ENCODE measurements at regions of chr20 and their contacts with region 1.

Region 1: DNA sequence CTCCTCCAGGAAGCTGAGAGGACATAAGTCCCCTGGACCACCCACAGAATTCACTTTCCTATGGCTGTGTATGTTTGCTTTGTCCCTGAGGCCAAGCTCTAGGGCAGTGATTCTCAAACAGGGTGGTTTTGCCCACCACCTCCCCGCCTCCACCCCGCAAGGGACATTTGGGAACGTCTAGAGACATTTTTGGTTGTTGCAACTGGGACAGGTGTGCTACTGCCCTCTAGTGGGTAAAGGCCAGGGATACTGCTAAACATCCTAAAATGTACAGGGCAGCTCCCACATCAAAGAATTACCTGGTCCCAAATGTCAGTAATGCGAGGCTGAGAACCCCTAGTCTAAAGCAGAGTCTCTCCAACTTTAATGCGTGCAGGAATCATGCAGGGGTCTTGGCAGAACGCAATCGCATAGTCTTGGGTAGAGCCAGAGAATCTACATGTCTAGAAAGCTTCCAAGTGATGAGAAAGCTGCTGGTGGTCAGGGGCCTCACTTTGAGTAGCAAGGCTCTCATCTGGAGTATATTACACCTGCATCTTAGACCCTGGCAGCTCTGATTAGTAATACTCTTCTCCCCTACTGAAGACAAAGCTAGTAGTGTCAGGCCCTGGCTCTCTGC is 5.1 kb downstream of the KCNS1 start:
- DNase-seq: peak; percentile 29 to 68 (median 49)
- H3K4me3 ChIP-seq: no peak overlapping the region
- H3K4me3 Mint-ChIP-seq: no peak overlapping the region
- H3K27ac ChIP-seq: no peak overlapping the region
- H3K27ac Mint-ChIP-seq: peak overlapping the region in 1 of 8 donors; percentile 63
- H3K4me1 ChIP-seq: peaks cover 3% of the 10 kb centered on the region
- H3K4me1 Mint-ChIP-seq: peaks cover 8 to 27% (median 12%) of the 10 kb centered on the region in 3 donors
- H3K27me3 ChIP-seq: peaks cover 35% of the 10 kb centered on the region
- H3K27me3 Mint-ChIP-seq: peaks cover 29 to 33% of the 10 kb centered on the region in 2 donors

Region 2: DNA sequence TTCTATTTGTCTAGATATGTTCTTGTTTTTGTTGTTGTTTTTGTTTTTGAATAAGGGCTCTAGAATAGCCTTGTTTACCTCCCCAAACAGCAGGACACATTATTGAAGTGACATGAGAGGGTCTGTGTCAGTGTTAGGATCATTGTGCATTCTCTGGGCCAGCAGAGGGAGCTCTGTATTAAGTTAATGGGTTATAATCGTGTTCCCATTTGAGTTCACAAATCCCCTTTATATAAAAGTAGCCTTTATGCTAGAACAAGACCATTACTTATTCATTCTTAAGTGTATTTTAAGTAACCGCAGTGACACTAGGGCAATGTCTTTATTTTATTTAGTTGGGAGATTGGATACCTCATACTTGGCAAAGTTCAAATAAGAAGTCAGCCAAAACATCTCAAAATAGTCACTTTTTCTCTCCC is 84.7 kb before region 1 on chr20:
- CTCF ChIA-PET with region 1: interaction called, 28 read pairs
- POLR2A ChIA-PET with region 1: no interaction called
- DNase-seq: peak; percentile 13 to 55 (median 19)
- H3K4me3 ChIP-seq: no peak overlapping the region
- H3K4me3 Mint-ChIP-seq: no peak overlapping the region
- H3K27ac ChIP-seq: no peak overlapping the region
- H3K27ac Mint-ChIP-seq: peak overlapping the region in 7 of 8 donors; percentile 4 to 80 (median 52)
- H3K4me1 ChIP-seq: peaks cover 32% of the 10 kb centered on the region
- H3K4me1 Mint-ChIP-seq: peaks cover 64 to 83% (median 83%) of the 10 kb centered on the region in 3 donors
- H3K27me3 ChIP-seq: no peaks in the 10 kb centered on the region
- H3K27me3 Mint-ChIP-seq: no peaks in the 10 kb centered on the region

Region 3: GRCh38 chr20:45036044-45036755 is 59.7 kb before region 1 on chr20:
- CTCF ChIA-PET with region 1: interaction called, 65 read pairs
- POLR2A ChIA-PET with region 1: no interaction called
- DNase-seq: no peak
- H3K4me3 ChIP-seq: no peak overlapping the region
- H3K4me3 Mint-ChIP-seq: peak overlapping the region in 2 of 7 donors; percentile 10 to 37
- H3K27ac ChIP-seq: no peak overlapping the region
- H3K27ac Mint-ChIP-seq: peak overlapping the region in 7 of 8 donors; percentile 4 to 83 (median 55)
- H3K4me1 ChIP-seq: peaks cover 55% of the 10 kb centered on the region
- H3K4me1 Mint-ChIP-seq: peaks cover 71 to 95% (median 93%) of the 10 kb centered on the region in 3 donors
- H3K27me3 ChIP-seq: no peaks in the 10 kb centered on the region
- H3K27me3 Mint-ChIP-seq: no peaks in the 10 kb centered on the region

Region 4: DNA sequence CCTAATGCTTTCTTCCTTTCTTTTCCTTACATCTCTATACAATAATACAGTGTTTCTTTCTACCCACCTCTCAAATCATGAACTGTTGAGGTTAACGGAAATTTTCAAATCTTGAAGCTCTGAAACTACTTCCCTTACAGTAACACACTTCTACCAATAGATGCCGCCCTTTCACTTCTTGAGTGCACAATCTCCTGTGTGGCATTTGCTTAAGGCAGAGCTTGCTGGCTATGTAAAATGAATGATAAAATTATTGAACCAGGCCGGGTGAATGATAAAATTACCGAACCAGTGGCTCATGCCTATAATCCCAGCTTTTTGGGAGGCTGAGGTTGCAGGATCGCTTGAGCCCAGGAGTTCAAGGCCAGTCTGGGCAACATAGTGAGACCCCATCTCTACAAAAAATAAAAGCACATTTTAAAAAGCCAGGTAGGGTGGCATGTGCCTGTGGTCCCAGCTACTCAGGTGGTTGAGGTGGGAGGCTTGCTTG is 51.7 kb before region 1 on chr20:
- CTCF ChIA-PET with region 1: interaction called, 65 read pairs
- POLR2A ChIA-PET with region 1: interaction called, 3 read pairs
- DNase-seq: peak; percentile 9 to 62 (median 47)
- H3K4me3 ChIP-seq: no peak overlapping the region
- H3K4me3 Mint-ChIP-seq: no peak overlapping the region
- H3K27ac ChIP-seq: no peak overlapping the region
- H3K27ac Mint-ChIP-seq: peak overlapping the region; percentile 11 to 96 (median 53)
- H3K4me1 ChIP-seq: peaks cover 39% of the 10 kb centered on the region
- H3K4me1 Mint-ChIP-seq: peaks cover 67 to 84% (median 84%) of the 10 kb centered on the region in 3 donors
- H3K27me3 ChIP-seq: no peaks in the 10 kb centered on the region
- H3K27me3 Mint-ChIP-seq: no peaks in the 10 kb centered on the region

Region 5: DNA sequence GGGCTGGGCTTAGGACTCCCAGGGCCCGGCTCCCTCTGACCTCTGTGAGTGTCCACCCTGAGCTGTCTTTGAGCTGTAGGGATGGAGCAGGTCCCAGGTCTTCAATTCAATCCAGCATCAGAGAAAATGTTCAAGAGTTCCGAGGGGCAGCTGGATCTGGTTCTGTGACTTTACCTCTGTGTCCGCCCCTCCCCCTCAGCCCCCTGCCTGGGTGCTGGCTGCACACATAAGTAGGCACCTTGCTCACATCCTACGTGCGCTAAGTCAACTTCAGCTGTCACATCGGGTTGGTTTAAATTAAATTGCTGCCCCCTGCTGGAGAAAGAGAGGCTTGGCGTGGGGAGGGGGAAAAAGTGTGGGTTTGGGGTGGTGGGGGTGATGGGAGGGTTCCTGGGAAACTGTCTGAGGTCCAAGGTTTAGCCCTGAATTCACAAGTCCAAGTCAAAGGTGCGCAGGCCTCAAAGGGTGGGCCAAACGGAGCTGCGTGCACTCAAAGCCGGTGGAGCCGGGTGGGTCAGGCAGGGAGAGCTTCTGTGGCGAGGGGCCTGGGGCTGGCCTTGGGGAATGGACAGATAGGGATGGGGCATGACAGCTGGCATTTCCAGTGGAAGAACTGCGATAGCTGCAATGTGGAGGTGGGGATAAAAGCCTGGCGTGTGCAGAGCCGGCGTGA is 16.1 kb after region 1 on chr20:
- CTCF ChIA-PET with region 1: interaction called, 26 read pairs
- POLR2A ChIA-PET with region 1: no interaction called
- DNase-seq: no peak
- H3K4me3 ChIP-seq: no peak overlapping the region
- H3K4me3 Mint-ChIP-seq: no peak overlapping the region
- H3K27ac ChIP-seq: no peak overlapping the region
- H3K27ac Mint-ChIP-seq: no peak overlapping the region
- H3K4me1 ChIP-seq: no peaks in the 10 kb centered on the region
- H3K4me1 Mint-ChIP-seq: peaks cover 5 to 14% (median 8%) of the 10 kb centered on the region in 3 donors
- H3K27me3 ChIP-seq: no peaks in the 10 kb centered on the region
- H3K27me3 Mint-ChIP-seq: peaks cover 11 to 14% of the 10 kb centered on the region in 2 donors